ENCODE measurements at regions of chr2 and their contacts with region 1.

Region 1: GRCh38 chr2:201964631-201965206 is 68.9 kb upstream of the FZD7 start:
- DNase-seq: no peak
- ATAC-seq: no peak
- H3K4me3 ChIP-seq: no peak overlapping the region
- H3K27ac ChIP-seq: no peak overlapping the region
- H3K4me1 ChIP-seq: no peaks in the 10 kb centered on the region
- H3K27me3 ChIP-seq: no peaks in the 10 kb centered on the region
- CTCF ChIP-seq: no peak
- POLR2A ChIP-seq: no peak

Region 2: DNA sequence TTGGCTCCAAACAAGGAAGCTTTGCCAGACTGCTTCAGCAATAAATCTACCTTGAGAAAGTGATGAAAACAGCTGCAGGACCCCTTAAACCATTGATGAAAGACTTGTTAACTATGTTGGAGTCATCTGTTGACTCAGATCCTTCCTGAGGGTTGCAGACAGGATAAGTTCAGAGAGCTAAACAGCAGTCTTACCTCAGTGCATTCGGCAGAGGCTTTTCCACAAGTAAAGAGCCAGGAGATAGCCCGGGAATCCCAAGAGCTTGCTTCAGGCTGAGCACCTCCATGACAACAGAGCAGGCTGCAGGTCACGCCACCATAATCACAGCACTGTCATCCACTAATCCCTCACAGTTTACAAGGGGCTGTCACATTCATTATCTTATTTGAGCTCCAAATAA is 132.0 kb after region 1 on chr2:
- in situ Hi-C with region 1: no loop called
- intact Hi-C with region 1: loop called (anchors 10 kb)
- DNase-seq: no peak
- ATAC-seq: no peak
- H3K4me3 ChIP-seq: no peak overlapping the region
- H3K27ac ChIP-seq: no peak overlapping the region
- H3K4me1 ChIP-seq: no peaks in the 10 kb centered on the region
- H3K27me3 ChIP-seq: no peaks in the 10 kb centered on the region
- CTCF ChIP-seq: no peak
- POLR2A ChIP-seq: no peak

Region 3: GRCh38 chr2:202588647-202589581 is 624.2 kb after region 1 on chr2:
- in situ Hi-C with region 1: no loop called
- intact Hi-C with region 1: no loop called
- DNase-seq: peak; percentile 29 to 52
- ATAC-seq: peak; percentile 85 to 94
- H3K4me3 ChIP-seq: peak overlapping the region; percentile 18 to 60 (median 30)
- H3K27ac ChIP-seq: no peak overlapping the region
- H3K4me1 ChIP-seq: peaks cover 0 to 3% of the 10 kb centered on the region in 2 donors
- H3K27me3 ChIP-seq: no peaks in the 10 kb centered on the region
- CTCF ChIP-seq: peak; percentile 65 to 95 (median 89)
- POLR2A ChIP-seq: no peak